ENCODE measurements at regions of chr4 and their contacts with region 1.

Region 1: DNA sequence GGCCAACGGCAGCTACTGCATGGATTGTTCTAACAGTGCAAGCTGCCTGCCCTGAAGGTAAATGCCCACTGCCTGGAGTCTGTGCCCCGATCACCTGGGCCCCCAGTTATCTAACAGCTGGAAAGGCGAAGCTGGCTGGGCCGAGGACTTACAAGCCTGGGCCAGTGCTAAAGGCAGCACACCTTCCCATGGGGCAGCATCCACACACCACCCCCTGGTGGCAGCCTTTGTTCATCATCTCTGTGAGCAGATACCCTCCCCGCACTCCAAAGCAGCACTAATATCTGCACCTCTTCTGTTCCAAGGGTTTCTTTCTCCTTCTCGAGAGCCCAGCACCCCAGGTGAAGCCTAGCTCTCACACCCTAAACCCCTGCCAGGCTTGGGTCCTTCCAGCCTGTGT is 7.6 kb downstream of the SLC2A9 start:
- DNase-seq: peak; percentile 63
- CTCF ChIP-seq: peak; percentile 54

Region 2: DNA sequence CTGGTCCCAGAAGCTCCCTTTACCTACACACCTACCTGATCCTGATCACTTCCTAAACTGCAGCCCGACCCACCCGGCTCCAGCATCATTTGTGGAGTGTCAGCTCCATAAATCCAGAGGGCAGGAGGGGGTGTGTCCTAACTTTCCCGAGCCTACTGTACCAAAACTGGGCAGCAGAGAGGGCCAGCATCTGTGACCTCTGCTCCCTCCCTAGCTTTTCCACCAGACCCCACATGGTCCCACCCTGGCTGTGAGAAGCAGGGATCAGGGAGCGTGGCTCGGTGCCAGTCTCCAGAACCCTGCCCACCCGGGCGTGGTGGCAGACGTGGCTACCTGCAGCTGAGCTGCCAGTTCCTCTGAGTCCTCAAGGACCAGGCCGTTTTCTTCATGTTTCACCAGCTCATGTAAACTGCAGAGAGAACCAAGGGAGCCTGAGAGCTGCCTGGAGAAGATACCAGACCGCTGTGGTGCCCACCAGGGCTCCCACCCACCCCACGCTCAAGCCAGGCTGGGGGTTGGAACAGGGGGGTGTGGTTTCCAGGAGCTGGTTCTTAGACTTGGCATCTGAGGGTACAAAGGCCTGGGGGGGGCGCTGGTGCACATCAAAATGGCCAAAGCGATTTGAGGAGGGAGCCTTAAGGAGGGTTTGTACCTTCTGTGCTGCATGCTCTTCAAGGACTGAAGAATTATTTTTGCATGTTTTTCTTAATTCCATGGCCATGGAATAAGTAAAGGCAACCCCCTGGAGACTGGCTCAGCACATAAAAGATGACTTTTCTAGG is 309.0 kb before region 1 on chr4:
- CTCF ChIA-PET with region 1: interaction called, 76 read pairs
- POLR2A ChIA-PET with region 1: no interaction called
- DNase-seq: no peak
- CTCF ChIP-seq: no peak

Region 3: DNA sequence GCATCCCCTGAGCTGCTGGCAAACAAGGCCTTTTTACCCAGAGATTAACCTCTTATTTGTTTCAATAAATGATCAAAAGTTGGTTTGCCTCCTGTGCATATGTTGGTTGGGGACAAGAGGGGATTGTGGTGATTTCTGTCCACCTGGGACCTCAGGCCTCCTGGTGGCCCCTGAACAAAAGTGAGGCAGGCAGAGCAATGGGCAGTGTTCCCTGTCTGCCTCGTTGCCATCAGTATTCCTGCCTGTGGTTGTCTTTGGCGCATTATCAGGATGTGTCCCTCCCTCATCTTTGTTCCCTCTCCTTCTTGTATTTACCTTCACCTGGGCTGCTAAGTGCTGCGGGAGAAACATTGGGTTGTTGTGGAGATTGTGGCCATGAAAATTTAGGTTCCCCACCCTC is 297.6 kb before region 1 on chr4:
- CTCF ChIA-PET with region 1: no interaction called
- POLR2A ChIA-PET with region 1: no interaction called
- DNase-seq: no peak
- CTCF ChIP-seq: no peak

Region 4: DNA sequence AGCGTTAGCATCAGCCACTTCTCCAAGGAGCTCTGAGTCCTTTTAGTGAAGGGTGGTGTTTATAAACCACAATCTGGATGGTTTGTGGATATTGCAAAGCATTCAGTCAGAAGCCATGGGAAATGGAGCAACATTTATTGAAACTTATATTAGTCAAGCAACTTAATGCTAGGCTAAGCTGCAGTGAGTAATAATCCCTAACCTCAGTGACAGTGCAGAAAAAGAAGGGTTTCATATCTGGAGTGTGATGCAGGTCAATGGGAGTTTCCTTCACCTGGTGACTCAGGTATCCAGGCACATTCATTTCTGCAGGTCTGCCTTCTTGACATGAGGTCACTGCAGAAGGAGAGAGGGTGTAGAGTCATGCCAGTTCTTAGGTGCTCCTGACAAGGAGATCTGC is 242.7 kb before region 1 on chr4:
- CTCF ChIA-PET with region 1: interaction called, 162 read pairs
- POLR2A ChIA-PET with region 1: no interaction called
- DNase-seq: no peak
- CTCF ChIP-seq: no peak

Region 5: GRCh38 chr4:9898596-9899305 is 115.0 kb before region 1 on chr4:
- CTCF ChIA-PET with region 1: interaction called, 15 read pairs
- POLR2A ChIA-PET with region 1: no interaction called
- DNase-seq: no peak
- CTCF ChIP-seq: no peak

Region 6: DNA sequence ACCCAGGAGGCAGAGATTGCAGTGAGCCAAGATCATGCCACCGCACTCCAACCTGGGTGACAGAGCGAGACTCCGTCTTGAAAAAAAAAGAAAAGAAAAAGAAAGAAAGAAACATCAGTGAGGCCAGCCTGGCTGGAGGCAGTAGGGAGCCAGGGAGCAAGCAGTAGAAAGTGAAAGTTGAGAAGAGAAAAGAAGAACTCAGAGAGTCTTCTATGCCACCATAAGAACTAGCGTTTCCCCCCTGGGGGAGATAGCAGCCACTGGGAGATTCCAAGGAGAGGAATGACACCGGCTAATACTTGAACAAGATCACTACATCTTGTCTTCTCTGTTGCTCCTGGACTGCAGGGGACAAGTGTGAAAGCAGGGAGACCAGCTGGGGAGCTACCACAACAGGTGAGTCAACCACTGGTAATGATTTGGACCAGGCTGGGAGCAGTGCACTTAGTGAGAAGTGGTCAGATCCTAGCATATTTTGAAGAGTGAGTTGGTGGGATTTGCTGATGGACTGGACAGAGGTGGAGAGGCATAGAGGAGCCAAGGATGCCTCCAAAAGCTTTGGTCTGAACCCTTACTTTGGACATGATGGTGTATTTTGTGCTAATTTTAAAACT is 25.9 kb before region 1 on chr4:
- CTCF ChIA-PET with region 1: interaction called, 38 read pairs
- POLR2A ChIA-PET with region 1: no interaction called
- DNase-seq: peak; percentile 43
- CTCF ChIP-seq: no peak

Region 7: DNA sequence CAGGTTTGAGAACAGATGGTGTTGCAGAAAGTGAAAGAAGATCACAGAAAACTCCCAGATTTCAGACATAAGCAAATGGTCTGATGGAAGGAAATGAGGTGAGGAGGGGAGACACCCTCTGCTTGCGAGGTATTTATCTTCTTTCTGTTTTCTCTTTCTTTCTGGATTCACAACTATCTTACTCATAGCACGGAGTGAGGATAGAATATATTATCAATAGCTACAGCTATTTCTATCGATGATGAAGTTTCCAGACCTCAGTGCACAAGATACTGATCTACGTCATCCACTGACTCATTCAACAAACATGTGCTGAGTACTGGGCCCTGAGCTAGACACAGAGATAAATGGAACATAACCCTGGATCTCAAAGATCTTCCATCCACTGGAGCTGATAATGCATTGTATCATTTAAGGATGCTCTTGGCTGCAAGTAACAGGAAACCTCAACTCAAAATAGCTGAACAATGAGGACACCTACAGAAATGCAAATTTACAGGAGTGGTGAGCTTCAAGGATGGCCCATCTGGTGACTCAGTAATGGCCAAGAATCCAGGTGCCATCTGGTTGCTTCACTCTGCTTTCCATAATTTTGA is 13.7 kb before region 1 on chr4:
- CTCF ChIA-PET with region 1: interaction called, 63 read pairs
- POLR2A ChIA-PET with region 1: no interaction called
- DNase-seq: peak; percentile 38
- CTCF ChIP-seq: no peak